BJ (cell line): ENCODE measurements at regions of chr1 and their contacts with region 1.

Region 1: GRCh38 chr1:233440951-233441401 is 113.5 kb downstream of the MAP3K21 start:
- DNase-seq: no peak
- H3K4me3 ChIP-seq: no peak overlapping the region
- H3K27me3 ChIP-seq: no peaks in the 10 kb centered on the region; the same call in 1 of the 2 replicates
- CTCF ChIP-seq: peak; percentile 69

Region 2: GRCh38 chr1:233424779-233425178 is 16.2 kb before region 1 on chr1:
- CTCF ChIA-PET with region 1: interaction called, 10 read pairs
- POLR2A ChIA-PET with region 1: no interaction called
- DNase-seq: no peak
- H3K4me3 ChIP-seq: no peak overlapping the region
- H3K27me3 ChIP-seq: no peaks in the 10 kb centered on the region
- CTCF ChIP-seq: 0 out of 2 replicates have a peak, but pooled peaks have one; percentile 8

Region 3: GRCh38 chr1:233790662-233791375 is 349.8 kb after region 1 on chr1:
- CTCF ChIA-PET with region 1: interaction called, 61 read pairs
- POLR2A ChIA-PET with region 1: no interaction called
- DNase-seq: peak; percentile 4
- H3K4me3 ChIP-seq: no peak overlapping the region
- H3K27me3 ChIP-seq: no peaks in the 10 kb centered on the region
- CTCF ChIP-seq: peak; percentile 92

Region 4: DNA sequence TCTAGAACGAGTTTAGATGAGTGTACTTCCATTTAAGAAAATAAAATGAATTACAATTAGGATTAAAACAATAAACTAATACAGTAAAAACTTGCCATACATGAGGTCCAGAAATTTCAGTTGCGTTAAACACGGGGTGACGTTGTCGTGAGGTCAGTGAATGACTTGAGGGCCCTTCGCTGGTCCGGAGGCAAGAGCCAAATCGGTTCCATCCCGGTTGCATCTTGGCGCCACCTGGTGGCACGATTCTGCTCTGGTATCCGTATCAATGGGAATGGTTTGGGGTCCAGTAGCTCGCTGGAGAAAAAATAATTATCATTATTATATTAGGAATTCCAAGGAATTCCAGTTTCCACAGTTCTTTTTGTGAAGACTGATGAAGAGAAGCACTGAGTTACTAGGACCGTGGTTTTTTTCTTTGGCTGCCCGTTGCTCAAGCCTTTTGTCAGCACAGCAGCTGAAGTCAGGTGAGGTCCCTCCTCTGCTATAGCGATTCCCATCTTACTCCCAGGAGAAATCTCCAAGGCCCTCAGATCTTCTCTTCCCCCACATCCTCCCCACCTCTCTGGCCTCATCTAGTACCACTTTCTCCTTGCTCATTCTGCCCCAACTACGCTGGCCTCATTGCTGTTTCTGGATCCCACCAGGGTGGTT is 624.9 kb after region 1 on chr1:
- CTCF ChIA-PET with region 1: interaction called, 44 read pairs
- POLR2A ChIA-PET with region 1: no interaction called
- DNase-seq: no peak
- H3K4me3 ChIP-seq: no peak overlapping the region
- H3K27me3 ChIP-seq: no peaks in the 10 kb centered on the region
- CTCF ChIP-seq: peak; percentile 85